ENCODE measurements at regions of chr14 and their contacts with region 1.

Region 1: GRCh38 chr14:21078287-21078686 is 8.2 kb downstream of the ARHGEF40 start:
- DNase-seq: no peak
- ATAC-seq: no peak
- H3K4me3 ChIP-seq: no peak overlapping the region
- H3K4me3 Mint-ChIP-seq: no peak overlapping the region
- H3K27ac ChIP-seq: no peak overlapping the region
- H3K27ac Mint-ChIP-seq: no peak overlapping the region
- H3K4me1 ChIP-seq: no peaks in the 10 kb centered on the region
- H3K4me1 Mint-ChIP-seq: peaks cover 3% of the 10 kb centered on the region
- H3K27me3 ChIP-seq: peaks cover 0 to 6% (median 0%) of the 10 kb centered on the region in 4 experiments
- H3K27me3 Mint-ChIP-seq: peaks cover 10% of the 10 kb centered on the region
- CTCF ChIP-seq: no peak

Region 2: DNA sequence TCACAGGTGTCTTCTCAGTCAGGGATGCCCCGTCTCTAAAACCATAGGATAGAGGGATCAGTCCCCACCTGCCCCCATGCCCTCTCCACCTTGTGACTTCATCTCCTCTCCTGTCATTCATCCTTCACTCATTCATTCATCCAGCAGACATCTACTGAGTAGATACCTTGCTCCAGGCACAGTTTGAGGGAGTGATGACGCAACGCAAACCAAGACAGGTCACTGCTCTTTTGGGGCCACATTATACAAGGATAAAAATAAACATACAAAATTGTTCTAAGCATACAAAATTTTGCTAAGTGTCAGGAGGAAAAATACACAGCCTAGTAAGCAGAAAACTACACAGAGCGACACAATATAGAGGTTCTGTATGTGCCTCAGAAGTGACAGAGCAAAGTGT is 155.8 kb before region 1 on chr14:
- CTCF ChIA-PET with region 1: no interaction called
- POLR2A ChIA-PET with region 1: no interaction called
- intact Hi-C with region 1: no loop called
- DNase-seq: no peak
- ATAC-seq: no peak
- H3K4me3 ChIP-seq: no peak overlapping the region
- H3K4me3 Mint-ChIP-seq: no peak overlapping the region
- H3K27ac ChIP-seq: no peak overlapping the region
- H3K27ac Mint-ChIP-seq: no peak overlapping the region
- H3K4me1 ChIP-seq: no peaks in the 10 kb centered on the region
- H3K4me1 Mint-ChIP-seq: no peaks in the 10 kb centered on the region
- H3K27me3 ChIP-seq: peaks cover 0 to 14% (median 7%) of the 10 kb centered on the region in 4 experiments
- H3K27me3 Mint-ChIP-seq: peaks cover 44% of the 10 kb centered on the region
- CTCF ChIP-seq: no peak

Region 3: DNA sequence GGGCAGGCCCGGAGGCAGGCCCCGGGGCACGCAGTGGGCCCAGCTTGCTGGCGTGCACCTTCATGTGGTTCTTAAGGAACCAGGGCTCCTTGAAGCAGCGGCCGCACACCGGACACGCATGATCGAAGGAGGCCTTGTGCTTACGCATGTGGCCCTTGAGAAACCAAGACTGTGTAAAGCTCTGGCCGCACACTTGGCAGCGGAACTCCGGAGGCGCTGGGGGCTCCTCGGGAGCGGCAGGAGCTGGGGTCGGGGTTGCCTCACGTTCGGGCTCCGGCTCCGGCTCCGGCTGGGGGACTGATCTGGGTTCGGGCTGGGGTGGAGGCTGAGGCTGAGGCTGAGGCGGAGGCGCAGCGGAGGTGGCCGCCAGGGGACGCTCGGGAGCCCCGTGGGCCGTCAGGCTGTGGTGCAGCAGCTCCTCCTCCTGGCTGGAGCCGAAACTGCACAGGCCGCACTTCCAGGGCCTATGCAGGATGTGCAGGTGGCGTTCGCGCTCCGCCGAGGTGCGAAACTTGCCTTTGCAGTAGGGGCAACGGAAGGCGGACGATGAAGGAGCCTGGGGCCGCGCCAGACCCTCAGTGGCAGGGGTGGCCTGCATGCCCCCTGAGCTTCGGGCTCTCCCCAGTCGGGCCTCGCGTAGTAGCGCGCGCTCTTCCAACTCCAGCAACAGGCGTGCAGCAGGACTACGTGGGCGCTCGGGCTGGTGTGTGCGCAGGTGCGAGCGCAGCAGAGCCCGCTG is 14.2 kb after region 1 on chr14:
- CTCF ChIA-PET with region 1: interaction called, 91 read pairs
- POLR2A ChIA-PET with region 1: no interaction called
- intact Hi-C with region 1: no loop called
- DNase-seq: peak; percentile 93
- ATAC-seq: peak; percentile 99
- H3K4me3 ChIP-seq: no peak overlapping the region
- H3K4me3 Mint-ChIP-seq: peak overlapping the region; percentile 27
- H3K27ac ChIP-seq: no peak overlapping the region
- H3K27ac Mint-ChIP-seq: peak overlapping the region; percentile 72
- H3K4me1 ChIP-seq: peaks cover 6 to 16% of the 10 kb centered on the region in 2 donors
- H3K4me1 Mint-ChIP-seq: peaks cover 14% of the 10 kb centered on the region
- H3K27me3 ChIP-seq: peaks cover 0 to 4% (median 0%) of the 10 kb centered on the region in 4 experiments
- H3K27me3 Mint-ChIP-seq: no peaks in the 10 kb centered on the region
- CTCF ChIP-seq: peak; percentile 100